CD4-positive, alpha-beta T cell (primary cell): ENCODE measurements at regions of chr22 and their contacts with region 1.

Region 1: GRCh38 chr22:37608477-37609239 is at the start of gene GGA1:
- DNase-seq: peak; percentile 90 to 100 (median 94)
- ATAC-seq: peak; percentile 77
- H3K4me3 ChIP-seq: peak within 1 kb of the TSS; percentile 92
- H3K4me3 Mint-ChIP-seq: peak within 1 kb of the TSS; percentile 94
- H3K27ac ChIP-seq: peak within 1 kb of the TSS; percentile 88 to 98
- H3K27ac Mint-ChIP-seq: peak within 1 kb of the TSS; percentile 92
- H3K4me1 ChIP-seq: peaks cover 75% of the 10 kb centered on the region
- H3K4me1 Mint-ChIP-seq: peaks cover 55% of the 10 kb centered on the region
- H3K27me3 ChIP-seq: no peaks in the 10 kb centered on the region
- H3K27me3 Mint-ChIP-seq: no peaks in the 10 kb centered on the region
- CTCF ChIP-seq: no peak
- total RNA-seq, gene GGA1: 57.0 to 60.9 TPM

Region 2: DNA sequence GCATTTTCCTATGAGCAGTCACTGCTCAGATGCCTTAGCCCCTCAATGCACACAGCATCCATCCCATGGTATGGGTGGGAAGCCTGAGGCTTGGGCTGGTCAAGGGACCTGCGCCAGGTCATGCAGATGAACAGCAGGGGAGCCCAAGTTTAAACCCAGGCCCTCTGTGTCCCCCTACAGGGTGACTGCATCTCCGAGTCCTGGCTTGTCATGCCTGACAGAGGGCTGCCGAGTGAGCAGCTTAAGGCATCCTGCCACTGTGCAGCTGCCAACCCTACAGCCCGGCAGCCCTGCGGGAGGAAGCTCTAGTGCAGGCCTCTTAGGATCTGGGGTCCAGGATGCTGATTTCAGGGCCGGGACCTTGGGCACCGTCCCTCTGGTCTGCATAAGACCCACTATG is 468.9 kb before region 1 on chr22:
- CTCF ChIA-PET with region 1: no interaction called
- POLR2A ChIA-PET with region 1: no interaction called
- intact Hi-C with region 1: no loop called
- DNase-seq: no peak
- ATAC-seq: no peak
- H3K4me3 ChIP-seq: no peak overlapping the region
- H3K4me3 Mint-ChIP-seq: no peak overlapping the region
- H3K27ac ChIP-seq: peak overlapping the region in 1 of 2 donors; percentile 42
- H3K27ac Mint-ChIP-seq: no peak overlapping the region
- H3K4me1 ChIP-seq: peaks cover 35% of the 10 kb centered on the region
- H3K4me1 Mint-ChIP-seq: peaks cover 4% of the 10 kb centered on the region
- H3K27me3 ChIP-seq: no peaks in the 10 kb centered on the region
- H3K27me3 Mint-ChIP-seq: no peaks in the 10 kb centered on the region
- CTCF ChIP-seq: no peak

Region 3: GRCh38 chr22:37244114-37244921 is 364.3 kb before region 1 on chr22 and contains the start of gene RAC2:
- CTCF ChIA-PET with region 1: interaction called, 4 read pairs
- POLR2A ChIA-PET with region 1: interaction called, 11 read pairs
- intact Hi-C with region 1: no loop called
- DNase-seq: peak; percentile 72 to 95 (median 88)
- ATAC-seq: peak; percentile 59
- H3K4me3 ChIP-seq: peak within 1 kb of the TSS; percentile 100
- H3K4me3 Mint-ChIP-seq: peak within 1 kb of the TSS; percentile 95
- H3K27ac ChIP-seq: peak within 1 kb of the TSS; percentile 85 to 96
- H3K27ac Mint-ChIP-seq: peak within 1 kb of the TSS; percentile 97
- H3K4me1 ChIP-seq: peaks cover 58% of the 10 kb centered on the region
- H3K4me1 Mint-ChIP-seq: peaks cover 58% of the 10 kb centered on the region
- H3K27me3 ChIP-seq: no peaks in the 10 kb centered on the region
- H3K27me3 Mint-ChIP-seq: no peaks in the 10 kb centered on the region
- CTCF ChIP-seq: no peak
- total RNA-seq, gene RAC2: 174 to 180 TPM

Region 4: GRCh38 chr22:37260901-37261336 is 347.7 kb before region 1 on chr22:
- CTCF ChIA-PET with region 1: no interaction called
- POLR2A ChIA-PET with region 1: no interaction called
- intact Hi-C with region 1: no loop called
- DNase-seq: peak in 13 of 14 experiments; percentile 49 to 81 (median 59)
- ATAC-seq: peak; percentile 80
- H3K4me3 ChIP-seq: no peak overlapping the region
- H3K4me3 Mint-ChIP-seq: no peak overlapping the region
- H3K27ac ChIP-seq: no peak overlapping the region
- H3K27ac Mint-ChIP-seq: peak overlapping the region; percentile 12
- H3K4me1 ChIP-seq: peaks cover 25% of the 10 kb centered on the region
- H3K4me1 Mint-ChIP-seq: peaks cover 24% of the 10 kb centered on the region
- H3K27me3 ChIP-seq: no peaks in the 10 kb centered on the region
- H3K27me3 Mint-ChIP-seq: no peaks in the 10 kb centered on the region
- CTCF ChIP-seq: peak; percentile 85

Region 5: GRCh38 chr22:37353839-37354238 is 254.8 kb before region 1 on chr22:
- CTCF ChIA-PET with region 1: no interaction called
- POLR2A ChIA-PET with region 1: no interaction called
- intact Hi-C with region 1: no loop called
- DNase-seq: no peak
- ATAC-seq: no peak
- H3K4me3 ChIP-seq: no peak overlapping the region
- H3K4me3 Mint-ChIP-seq: no peak overlapping the region
- H3K27ac ChIP-seq: no peak overlapping the region
- H3K27ac Mint-ChIP-seq: no peak overlapping the region
- H3K4me1 ChIP-seq: no peaks in the 10 kb centered on the region
- H3K4me1 Mint-ChIP-seq: no peaks in the 10 kb centered on the region
- H3K27me3 ChIP-seq: no peaks in the 10 kb centered on the region
- H3K27me3 Mint-ChIP-seq: no peaks in the 10 kb centered on the region
- CTCF ChIP-seq: no peak

Region 6: GRCh38 chr22:37508431-37508992 is 100.1 kb before region 1 on chr22:
- CTCF ChIA-PET with region 1: no interaction called
- POLR2A ChIA-PET with region 1: no interaction called
- intact Hi-C with region 1: no loop called
- DNase-seq: no peak
- ATAC-seq: no peak
- H3K4me3 ChIP-seq: no peak overlapping the region
- H3K4me3 Mint-ChIP-seq: no peak overlapping the region
- H3K27ac ChIP-seq: no peak overlapping the region
- H3K27ac Mint-ChIP-seq: no peak overlapping the region
- H3K4me1 ChIP-seq: no peaks in the 10 kb centered on the region
- H3K4me1 Mint-ChIP-seq: no peaks in the 10 kb centered on the region
- H3K27me3 ChIP-seq: no peaks in the 10 kb centered on the region
- H3K27me3 Mint-ChIP-seq: no peaks in the 10 kb centered on the region
- CTCF ChIP-seq: no peak

Region 7: GRCh38 chr22:37566903-37567820 is 41.5 kb before region 1 on chr22:
- CTCF ChIA-PET with region 1: interaction called, 10 read pairs
- POLR2A ChIA-PET with region 1: interaction called, 25 read pairs
- intact Hi-C with region 1: no loop called
- DNase-seq: peak; percentile 79 to 96 (median 89)
- ATAC-seq: peak; percentile 90
- H3K4me3 ChIP-seq: peak overlapping the region; percentile 22
- H3K4me3 Mint-ChIP-seq: peak overlapping the region; percentile 69
- H3K27ac ChIP-seq: no peak overlapping the region
- H3K27ac Mint-ChIP-seq: no peak overlapping the region
- H3K4me1 ChIP-seq: peaks cover 28% of the 10 kb centered on the region
- H3K4me1 Mint-ChIP-seq: peaks cover 29% of the 10 kb centered on the region
- H3K27me3 ChIP-seq: peaks cover 9 to 17% of the 10 kb centered on the region in 2 experiments
- H3K27me3 Mint-ChIP-seq: peaks cover 26% of the 10 kb centered on the region
- CTCF ChIP-seq: peak; percentile 92

Region 8: GRCh38 chr22:37623075-37624016 is 14.7 kb after region 1 on chr22:
- CTCF ChIA-PET with region 1: no interaction called
- POLR2A ChIA-PET with region 1: interaction called, 59 read pairs
- intact Hi-C with region 1: no loop called
- DNase-seq: peak; percentile 69 to 87 (median 73)
- ATAC-seq: peak; percentile 73
- H3K4me3 ChIP-seq: no peak overlapping the region
- H3K4me3 Mint-ChIP-seq: peak overlapping the region; percentile 76
- H3K27ac ChIP-seq: peak overlapping the region in 1 of 2 donors; percentile 26
- H3K27ac Mint-ChIP-seq: peak overlapping the region; percentile 90
- H3K4me1 ChIP-seq: peaks cover 55% of the 10 kb centered on the region
- H3K4me1 Mint-ChIP-seq: peaks cover 38% of the 10 kb centered on the region
- H3K27me3 ChIP-seq: no peaks in the 10 kb centered on the region
- H3K27me3 Mint-ChIP-seq: no peaks in the 10 kb centered on the region
- CTCF ChIP-seq: peak; percentile 87

Region 9: DNA sequence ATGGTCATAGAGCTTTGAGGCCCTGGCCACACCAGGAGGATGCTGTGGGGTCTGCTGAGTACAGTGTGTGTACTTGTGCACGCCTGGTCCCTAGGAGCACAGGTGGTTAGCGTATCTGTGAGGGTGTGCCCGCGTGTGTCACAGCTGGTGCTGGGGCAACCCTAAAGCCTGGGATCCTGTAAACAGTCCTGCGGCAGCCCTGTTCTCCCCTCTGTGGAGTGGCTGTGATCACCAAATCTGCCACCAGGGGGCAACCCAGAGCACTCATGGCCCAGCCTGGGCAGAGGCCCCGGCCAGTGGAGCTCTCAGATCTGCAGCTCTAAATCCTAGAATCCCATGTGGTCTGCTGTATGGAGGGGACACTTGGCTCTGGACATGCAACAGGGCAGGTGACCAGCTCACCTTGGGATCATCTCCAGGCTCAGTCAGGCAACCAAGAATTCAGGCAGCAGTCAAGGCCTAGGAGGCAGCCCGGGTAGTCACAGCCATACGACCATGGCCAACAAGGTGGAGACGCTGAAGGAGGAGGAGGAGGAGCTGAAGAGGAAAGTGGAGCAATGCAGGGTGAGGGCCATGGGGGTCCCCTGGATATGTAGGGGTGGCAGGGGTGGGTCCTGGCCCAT is 34.7 kb after region 1 on chr22:
- CTCF ChIA-PET with region 1: interaction called, 30 read pairs
- POLR2A ChIA-PET with region 1: interaction called, 71 read pairs
- intact Hi-C with region 1: no loop called
- DNase-seq: peak; percentile 73 to 94 (median 87)
- ATAC-seq: peak; percentile 68
- H3K4me3 ChIP-seq: no peak overlapping the region
- H3K4me3 Mint-ChIP-seq: peak overlapping the region; percentile 85
- H3K27ac ChIP-seq: no peak overlapping the region
- H3K27ac Mint-ChIP-seq: peak overlapping the region; percentile 80
- H3K4me1 ChIP-seq: peaks cover 65% of the 10 kb centered on the region
- H3K4me1 Mint-ChIP-seq: peaks cover 35% of the 10 kb centered on the region
- H3K27me3 ChIP-seq: no peaks in the 10 kb centered on the region
- H3K27me3 Mint-ChIP-seq: no peaks in the 10 kb centered on the region
- CTCF ChIP-seq: peak; percentile 91

Region 10: GRCh38 chr22:37676736-37677492 is 68.3 kb after region 1 on chr22:
- CTCF ChIA-PET with region 1: interaction called, 13 read pairs
- POLR2A ChIA-PET with region 1: interaction called, 38 read pairs
- intact Hi-C with region 1: loop called in 1 of 2 experiments (anchors 1 kb)
- DNase-seq: peak; percentile 90 to 97 (median 94)
- ATAC-seq: peak; percentile 83
- H3K4me3 ChIP-seq: peak overlapping the region; percentile 88
- H3K4me3 Mint-ChIP-seq: peak overlapping the region; percentile 89
- H3K27ac ChIP-seq: peak overlapping the region; percentile 91 to 99
- H3K27ac Mint-ChIP-seq: peak overlapping the region; percentile 96
- H3K4me1 ChIP-seq: peaks cover 72% of the 10 kb centered on the region
- H3K4me1 Mint-ChIP-seq: peaks cover 58% of the 10 kb centered on the region
- H3K27me3 ChIP-seq: no peaks in the 10 kb centered on the region
- H3K27me3 Mint-ChIP-seq: no peaks in the 10 kb centered on the region
- CTCF ChIP-seq: no peak

Region 11: DNA sequence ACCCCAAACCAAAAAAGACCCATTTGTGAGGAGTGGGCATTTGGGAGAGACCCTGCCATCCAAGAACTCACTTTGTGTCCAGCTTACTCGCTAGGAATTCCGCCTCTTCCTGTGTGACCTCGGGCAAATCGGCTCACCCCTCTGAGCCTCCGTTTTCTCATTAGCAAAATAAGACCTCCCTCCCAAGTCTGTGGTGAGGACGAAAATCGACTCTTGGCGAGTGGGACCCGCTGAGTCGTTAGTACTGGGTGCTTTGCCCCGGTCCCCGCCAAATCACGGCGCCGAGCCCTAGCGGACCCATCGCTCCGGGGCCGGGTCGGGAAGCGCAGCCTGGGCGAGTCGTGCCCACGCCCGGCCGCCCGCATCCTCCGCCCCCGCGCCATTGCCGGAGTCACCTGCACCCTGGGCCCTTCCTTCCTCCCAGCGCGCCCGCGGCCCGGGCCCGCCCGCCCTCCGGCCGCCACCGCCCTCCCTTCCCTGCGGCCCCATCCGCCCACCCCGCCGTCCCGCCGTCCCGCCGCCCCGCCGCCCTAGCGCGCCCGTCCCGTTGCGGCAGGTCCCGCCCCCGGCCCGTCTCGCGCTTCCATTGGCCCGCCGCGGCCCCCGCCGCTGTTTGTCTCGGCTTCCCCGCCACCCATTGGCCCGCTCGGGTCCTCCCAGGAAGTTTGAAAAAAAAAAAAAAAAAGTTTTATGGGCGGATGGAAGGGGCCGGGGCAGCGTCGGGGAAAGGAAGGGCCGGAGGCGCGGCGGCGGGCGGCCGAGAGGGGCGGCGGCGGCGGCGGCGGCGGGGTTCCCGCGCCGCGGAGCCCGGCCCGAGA is 137.1 kb after region 1 on chr22:
- CTCF ChIA-PET with region 1: no interaction called
- POLR2A ChIA-PET with region 1: no interaction called
- intact Hi-C with region 1: loop called in 1 of 2 experiments (anchors 5 kb)
- DNase-seq: peak; percentile 68 to 92 (median 84)
- ATAC-seq: peak; percentile 95
- H3K4me3 ChIP-seq: peak overlapping the region; percentile 90
- H3K4me3 Mint-ChIP-seq: peak overlapping the region; percentile 96
- H3K27ac ChIP-seq: peak overlapping the region in 1 of 2 donors; percentile 13
- H3K27ac Mint-ChIP-seq: peak overlapping the region; percentile 83
- H3K4me1 ChIP-seq: peaks cover 27% of the 10 kb centered on the region
- H3K4me1 Mint-ChIP-seq: peaks cover 22% of the 10 kb centered on the region
- H3K27me3 ChIP-seq: no peaks in the 10 kb centered on the region
- H3K27me3 Mint-ChIP-seq: no peaks in the 10 kb centered on the region
- CTCF ChIP-seq: no peak